K562 (cell line): ENCODE measurements at regions of chr6 and their contacts with region 1.

Region 1: DNA sequence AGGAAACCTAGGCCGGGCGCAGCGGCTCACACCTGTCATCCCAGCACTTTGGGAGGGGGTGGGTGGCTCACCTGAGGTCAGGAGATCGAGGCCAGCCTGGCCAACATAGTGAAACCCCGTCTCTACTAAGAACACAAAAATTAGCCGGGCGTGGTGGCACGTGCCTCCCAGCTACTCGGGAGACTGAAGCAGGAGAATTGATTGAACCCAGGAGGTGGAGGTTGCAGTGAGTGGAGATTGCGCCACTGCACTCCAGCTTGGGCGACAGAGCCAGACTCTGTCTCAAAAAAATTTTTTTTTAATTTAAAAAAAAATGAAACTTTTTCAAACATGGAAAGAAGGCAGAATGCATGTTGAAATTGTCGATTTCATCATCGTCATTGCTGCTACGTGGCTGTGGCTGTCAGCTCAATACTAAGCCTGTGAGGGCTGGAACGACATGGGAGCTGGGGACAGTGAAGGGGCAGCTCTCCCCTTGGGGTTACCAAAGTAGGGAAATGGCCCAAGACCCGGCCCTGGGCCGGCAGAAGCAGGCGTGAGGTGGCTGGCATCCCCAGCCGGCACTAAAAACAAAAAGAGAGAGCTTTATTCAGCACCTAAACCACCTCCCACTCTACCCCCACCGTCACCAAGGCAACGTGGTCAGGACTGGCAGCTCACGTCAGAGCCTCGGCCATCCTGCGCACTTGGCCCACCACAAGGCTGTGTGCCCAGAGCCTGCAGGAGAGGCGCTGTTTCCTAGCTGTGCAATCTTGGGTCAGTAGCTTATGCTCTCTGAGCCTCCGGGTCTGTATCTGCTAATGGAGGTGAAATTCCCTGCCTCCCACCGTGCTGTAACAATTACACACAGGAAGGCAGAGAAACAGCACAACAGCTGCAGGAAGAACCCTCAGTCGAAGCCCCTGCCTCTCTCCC is 30.8 kb downstream of the AGPAT4 start:
- DNase-seq: no peak
- ATAC-seq: peak; percentile 42
- H3K4me3 ChIP-seq: no peak overlapping the region
- H3K27ac ChIP-seq: no peak overlapping the region
- H3K4me1 ChIP-seq: peaks cover 7 to 20% of the 10 kb centered on the region in 2 experiments; a peak in 4 of 5 replicates
- H3K27me3 ChIP-seq: no peaks in the 10 kb centered on the region
- CTCF ChIP-seq: no peak
- EP300 ChIP-seq: no peak
- POLR2A ChIP-seq: no peak
- RAD21 ChIP-seq: no peak

Region 2: GRCh38 chr6:160986851-160987250 is 256.2 kb before region 1 on chr6:
- CTCF ChIA-PET with region 1: no interaction called
- POLR2A ChIA-PET with region 1: interaction called, 26 read pairs
- in situ Hi-C with region 1: loop called (anchors 5 kb)
- intact Hi-C with region 1: no loop called
- DNase-seq: no peak
- ATAC-seq: no peak
- H3K4me3 ChIP-seq: no peak overlapping the region
- H3K27ac ChIP-seq: no peak overlapping the region
- H3K4me1 ChIP-seq: peaks cover 5 to 6% of the 10 kb centered on the region in 2 experiments; a peak in 4 of 5 replicates
- H3K27me3 ChIP-seq: no peaks in the 10 kb centered on the region
- CTCF ChIP-seq: no peak
- EP300 ChIP-seq: no peak
- POLR2A ChIP-seq: no peak
- RAD21 ChIP-seq: no peak

Region 3: GRCh38 chr6:161215193-161215592 is 27.8 kb before region 1 on chr6:
- CTCF ChIA-PET with region 1: no interaction called
- POLR2A ChIA-PET with region 1: no interaction called
- in situ Hi-C with region 1: no loop called
- intact Hi-C with region 1: no loop called
- DNase-seq: peak in 2 of 4 experiments; percentile 65 to 66
- ATAC-seq: peak; percentile 78
- H3K4me3 ChIP-seq: no peak overlapping the region
- H3K27ac ChIP-seq: peak overlapping the region; percentile 56
- H3K4me1 ChIP-seq: peaks cover 0 to 10% of the 10 kb centered on the region in 2 experiments; a peak in 3 of 5 replicates
- H3K27me3 ChIP-seq: no peaks in the 10 kb centered on the region; a peak in 1 of 5 replicates
- CTCF ChIP-seq: no peak
- EP300 ChIP-seq: no peak
- POLR2A ChIP-seq: no peak
- RAD21 ChIP-seq: no peak

Region 4: GRCh38 chr6:161257793-161258457 is 14.9 kb after region 1 on chr6:
- CTCF ChIA-PET with region 1: no interaction called
- POLR2A ChIA-PET with region 1: interaction called, 11 read pairs
- in situ Hi-C with region 1: no loop called
- intact Hi-C with region 1: no loop called
- DNase-seq: no peak
- ATAC-seq: no peak
- H3K4me3 ChIP-seq: no peak overlapping the region
- H3K27ac ChIP-seq: peak overlapping the region; percentile 23; the same call in 1 of the 3 replicates
- H3K4me1 ChIP-seq: peaks cover 35 to 71% of the 10 kb centered on the region in 2 experiments; a peak in 4 of 5 replicates
- H3K27me3 ChIP-seq: no peaks in the 10 kb centered on the region; a peak in 1 of 5 replicates
- CTCF ChIP-seq: no peak; a peak in 1 of 6 replicates
- EP300 ChIP-seq: no peak
- POLR2A ChIP-seq: no peak
- RAD21 ChIP-seq: no peak

Region 5: DNA sequence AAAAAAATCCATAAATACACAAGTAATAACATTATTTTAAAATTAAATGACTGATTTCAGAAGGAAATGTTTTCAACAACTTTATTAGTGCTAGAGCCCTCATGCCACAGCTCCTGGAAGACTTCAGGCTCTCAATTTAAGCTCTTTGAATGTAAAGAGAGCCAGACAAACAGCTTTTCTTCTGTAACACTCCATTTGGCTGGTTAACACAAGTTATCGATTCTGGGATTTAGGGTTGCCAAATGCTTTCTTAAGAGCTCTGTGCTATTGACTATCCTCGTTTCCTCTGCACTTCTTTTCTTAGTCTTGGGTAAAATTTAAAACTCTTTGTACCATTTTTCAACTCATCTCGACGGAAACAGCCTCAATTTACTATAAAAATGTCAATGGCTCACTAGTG is 1082.0 kb after region 1 on chr6:
- CTCF ChIA-PET with region 1: no interaction called
- POLR2A ChIA-PET with region 1: no interaction called
- in situ Hi-C with region 1: no loop called
- intact Hi-C with region 1: no loop called
- DNase-seq: no peak
- ATAC-seq: no peak
- H3K4me3 ChIP-seq: no peak overlapping the region
- H3K27ac ChIP-seq: no peak overlapping the region
- H3K4me1 ChIP-seq: no peaks in the 10 kb centered on the region
- H3K27me3 ChIP-seq: no peaks in the 10 kb centered on the region
- CTCF ChIP-seq: no peak
- EP300 ChIP-seq: no peak
- POLR2A ChIP-seq: no peak
- RAD21 ChIP-seq: no peak